HEK293T (cell line): ENCODE measurements at regions of chr15 and their contacts with region 1.

Region 1: DNA sequence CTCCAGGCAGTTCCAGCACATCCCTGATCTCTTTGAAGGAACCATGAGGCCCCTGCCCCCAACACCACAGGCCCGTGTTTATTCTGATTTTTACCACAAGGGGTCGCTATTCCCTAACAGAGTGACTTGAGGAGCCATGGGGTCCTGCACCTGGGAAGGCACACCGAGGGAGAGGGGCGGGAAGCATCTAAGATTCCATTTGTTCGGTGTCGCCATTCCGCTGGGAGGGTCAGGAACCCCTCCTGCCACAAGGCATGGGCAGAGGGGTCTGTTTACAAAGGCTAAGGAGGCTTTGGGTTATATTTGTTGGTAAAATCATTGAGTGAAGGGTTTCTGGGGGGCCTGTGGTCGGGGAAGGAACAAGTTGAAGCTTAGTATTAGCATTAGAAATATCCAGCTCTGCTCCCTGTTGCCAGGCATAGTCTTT is 77.1 kb downstream of the WDR76 start:
- DNase-seq: peak; percentile 74

Region 2: GRCh38 chr15:43260011-43260615 is 643.8 kb before region 1 on chr15:
- CTCF ChIA-PET with region 1: no interaction called
- POLR2A ChIA-PET with region 1: no interaction called
- DNase-seq: no peak

Region 3: GRCh38 chr15:44066316-44066740 is 162.5 kb after region 1 on chr15:
- CTCF ChIA-PET with region 1: interaction called, 11 read pairs
- POLR2A ChIA-PET with region 1: no interaction called
- DNase-seq: peak; percentile 43